OCI-LY7 (cell line): ENCODE measurements at regions of chr5 and their contacts with region 1.

Region 1: DNA sequence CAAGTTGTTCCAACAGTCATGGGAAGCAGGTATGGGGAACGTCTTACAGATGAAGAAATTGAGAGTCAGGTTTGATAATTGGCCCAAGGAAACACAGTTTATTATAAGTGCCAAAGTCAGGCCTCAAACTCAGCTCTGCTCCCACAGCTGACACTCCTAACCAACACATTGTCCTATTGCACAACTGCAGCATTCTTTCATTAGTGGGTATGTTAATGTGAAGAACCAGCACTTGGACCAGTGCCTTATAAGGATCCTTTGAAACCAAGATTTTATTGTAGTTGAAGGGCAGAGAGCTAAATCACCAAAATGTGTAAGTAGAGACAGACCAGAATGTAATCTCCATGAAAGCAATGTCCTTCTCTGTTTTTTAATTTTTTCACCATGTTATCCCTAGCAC is 56.1 kb downstream of the GRIA1 start:
- DNase-seq: no peak
- H3K4me3 ChIP-seq: no peak overlapping the region
- H3K27ac ChIP-seq: no peak overlapping the region
- H3K4me1 ChIP-seq: peaks cover 24% of the 10 kb centered on the region
- CTCF ChIP-seq: no peak

Region 2: GRCh38 chr5:153530357-153531143 is 16.0 kb before region 1 on chr5:
- CTCF ChIA-PET with region 1: interaction called, 3 read pairs
- POLR2A ChIA-PET with region 1: interaction called, 11 read pairs
- intact Hi-C with region 1: no loop called
- DNase-seq: no peak
- H3K4me3 ChIP-seq: no peak overlapping the region
- H3K27ac ChIP-seq: no peak overlapping the region
- H3K4me1 ChIP-seq: no peaks in the 10 kb centered on the region
- CTCF ChIP-seq: no peak

Region 3: DNA sequence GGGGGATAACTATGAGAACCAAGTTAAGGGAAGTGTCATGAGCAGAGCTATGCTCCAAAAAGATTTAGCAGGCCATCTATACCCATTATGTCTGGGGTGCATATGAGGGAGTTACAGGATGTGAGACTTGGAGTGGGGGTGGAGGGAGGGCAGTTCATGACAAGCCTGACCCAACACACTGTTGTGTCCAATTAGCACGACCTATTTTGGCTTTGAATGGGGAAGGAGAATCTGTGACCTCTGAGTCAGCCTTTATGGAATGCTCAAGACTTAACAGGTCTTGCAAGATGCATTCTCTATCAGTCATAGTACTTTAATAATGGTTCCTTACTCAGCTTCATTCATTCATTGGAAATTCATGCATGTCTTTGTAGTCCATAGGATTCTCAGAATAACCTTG is 15.6 kb after region 1 on chr5:
- CTCF ChIA-PET with region 1: no interaction called
- POLR2A ChIA-PET with region 1: interaction called, 17 read pairs
- intact Hi-C with region 1: no loop called
- DNase-seq: no peak
- H3K4me3 ChIP-seq: no peak overlapping the region
- H3K27ac ChIP-seq: no peak overlapping the region
- H3K4me1 ChIP-seq: peaks cover 9% of the 10 kb centered on the region
- CTCF ChIP-seq: no peak